ENCODE measurements at regions of chr16 and their contacts with region 1.

Region 1: DNA sequence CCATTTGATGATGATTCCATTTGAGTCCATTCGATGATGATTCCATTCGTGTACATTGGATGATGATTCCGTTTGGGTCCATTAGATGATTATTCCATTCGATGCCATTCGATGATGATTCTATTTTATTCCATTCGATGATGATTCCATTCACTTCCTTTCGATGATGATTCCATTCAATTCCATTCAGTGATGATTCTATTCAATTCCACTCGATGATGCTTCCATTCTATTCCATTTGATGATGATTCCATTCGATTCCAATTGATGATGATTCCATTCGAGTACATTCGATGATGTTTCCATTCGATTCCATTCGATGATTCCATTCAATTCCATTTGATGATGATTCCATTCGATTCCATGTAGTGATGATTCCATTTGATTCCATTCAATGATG is 630.7 kb downstream of the TP53TG3F start:
- DNase-seq: no peak
- ATAC-seq: no peak
- H3K4me3 ChIP-seq: no peak overlapping the region
- H3K27ac ChIP-seq: no peak overlapping the region
- H3K4me1 ChIP-seq: no peaks in the 10 kb centered on the region
- H3K27me3 ChIP-seq: no peaks in the 10 kb centered on the region
- CTCF ChIP-seq: no peak

Region 2: GRCh38 chr16:34050787-34051320 is 39.3 kb before region 1 on chr16:
- CTCF ChIA-PET with region 1: no interaction called
- POLR2A ChIA-PET with region 1: no interaction called
- in situ Hi-C with region 1: no loop called
- intact Hi-C with region 1: loop called (anchors 10 kb)
- DNase-seq: no peak
- ATAC-seq: no peak
- H3K4me3 ChIP-seq: no peak overlapping the region
- H3K27ac ChIP-seq: no peak overlapping the region
- H3K4me1 ChIP-seq: no peaks in the 10 kb centered on the region
- H3K27me3 ChIP-seq: no peaks in the 10 kb centered on the region
- CTCF ChIP-seq: no peak

Measured in Panc1 (cell line).